ENCODE measurements at regions of chr20 and their contacts with region 1.

Region 1: GRCh38 chr20:49982346-49983122 is at the start of gene SNAI1:
- DNase-seq: peak; percentile 90
- H3K4me3 ChIP-seq: peak within 1 kb of the TSS; percentile 50
- H3K27ac ChIP-seq: peak within 1 kb of the TSS; percentile 49
- H3K4me1 ChIP-seq: peaks cover 37% of the 10 kb centered on the region
- H3K27me3 ChIP-seq: no peaks in the 10 kb centered on the region
- CTCF ChIP-seq: peak; percentile 59; the same call in 1 of the 2 replicates
- total RNA-seq, gene SNAI1: 4.1 and 4.4 TPM in 2 replicates

Region 2: DNA sequence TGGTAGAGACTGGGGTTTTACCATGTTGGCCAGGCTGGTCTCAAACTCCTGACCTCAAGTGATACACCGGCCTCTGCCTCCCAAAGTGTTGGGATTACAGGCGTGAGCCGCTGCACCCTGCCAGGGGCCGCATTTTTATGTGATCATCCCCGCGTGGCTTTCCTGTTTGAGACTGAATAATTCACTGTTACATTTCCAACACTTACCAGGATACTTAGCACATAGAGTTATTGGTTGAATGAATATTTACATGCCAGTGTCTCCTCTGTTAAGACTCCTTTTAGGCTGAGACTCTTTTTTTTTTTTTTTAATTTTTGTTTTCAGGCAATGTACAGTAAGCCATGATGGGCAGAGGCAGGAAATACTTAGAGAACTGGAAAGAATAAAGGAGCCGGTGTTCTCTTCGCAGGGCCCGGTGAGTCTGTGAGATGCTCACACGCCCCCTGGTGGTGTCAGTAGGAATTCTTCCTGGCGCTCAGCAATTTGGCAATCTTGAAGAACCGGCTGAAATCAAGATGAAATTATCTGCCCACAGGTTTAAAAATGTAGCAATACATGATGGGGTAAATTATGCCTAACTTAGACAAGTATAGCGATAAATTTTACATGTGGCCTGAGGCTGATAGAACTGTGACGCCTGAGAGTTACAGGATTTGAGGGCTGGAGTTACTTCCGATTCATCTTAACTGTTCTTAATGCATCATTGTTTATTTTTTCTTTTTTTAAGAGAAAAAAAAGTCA is 54.0 kb before region 1 on chr20:
- CTCF ChIA-PET with region 1: no interaction called
- POLR2A ChIA-PET with region 1: no interaction called
- intact Hi-C with region 1: no loop called
- DNase-seq: peak; percentile 91
- H3K4me3 ChIP-seq: no peak overlapping the region
- H3K27ac ChIP-seq: no peak overlapping the region
- H3K4me1 ChIP-seq: no peaks in the 10 kb centered on the region
- H3K27me3 ChIP-seq: no peaks in the 10 kb centered on the region
- CTCF ChIP-seq: peak; percentile 91

Region 3: DNA sequence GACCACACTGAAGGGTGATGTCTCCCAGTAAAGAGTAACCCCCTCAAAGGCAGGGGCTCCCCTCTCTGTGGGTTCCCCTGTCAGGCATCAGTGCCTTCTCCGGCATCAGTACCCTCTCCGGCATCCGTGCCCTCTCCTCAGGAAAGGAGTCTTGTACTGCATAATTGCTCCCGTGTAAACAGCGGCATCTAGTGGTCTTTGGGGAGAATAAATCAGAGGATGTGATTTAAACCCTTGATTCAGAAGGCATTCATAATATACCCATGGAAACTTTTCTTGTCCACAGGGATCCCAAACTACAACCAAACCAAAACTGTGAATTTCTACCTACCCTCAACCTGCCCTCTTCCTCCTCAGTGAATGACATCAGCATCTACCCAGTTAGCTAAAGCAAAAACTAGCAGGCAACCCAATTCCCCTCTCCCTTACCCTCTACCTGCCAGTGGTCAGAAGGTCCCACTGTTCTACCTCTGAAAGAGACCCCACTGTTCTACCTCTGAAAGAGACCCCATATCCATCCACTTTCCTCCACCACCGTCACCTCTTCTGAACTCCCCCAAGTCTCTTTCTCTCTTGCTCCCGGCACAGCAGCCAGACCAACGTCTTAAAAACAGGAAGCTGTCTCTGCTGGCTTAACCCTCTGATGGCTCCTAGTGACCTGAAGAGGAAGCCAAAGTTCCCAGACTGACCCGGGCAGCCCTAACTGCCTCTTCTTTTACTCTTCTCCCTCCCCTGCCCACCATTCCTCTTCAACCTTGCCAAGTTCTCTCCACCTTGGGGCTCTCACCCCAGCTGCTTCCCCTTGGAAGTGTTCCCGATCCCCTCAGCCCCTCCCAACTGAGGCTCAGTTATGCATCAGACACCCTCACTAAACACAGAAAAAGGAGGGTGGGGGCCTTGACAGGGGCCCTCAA is 103.2 kb after region 1 on chr20:
- CTCF ChIA-PET with region 1: interaction called, 15 read pairs
- POLR2A ChIA-PET with region 1: no interaction called
- intact Hi-C with region 1: no loop called
- DNase-seq: peak; percentile 85
- H3K4me3 ChIP-seq: no peak overlapping the region
- H3K27ac ChIP-seq: peak overlapping the region; percentile 67
- H3K4me1 ChIP-seq: peaks cover 20% of the 10 kb centered on the region
- H3K27me3 ChIP-seq: no peaks in the 10 kb centered on the region
- CTCF ChIP-seq: peak; percentile 90

Region 4: GRCh38 chr20:50165684-50166554 is 183.4 kb after region 1 on chr20:
- CTCF ChIA-PET with region 1: interaction called, 14 read pairs
- POLR2A ChIA-PET with region 1: no interaction called
- intact Hi-C with region 1: no loop called
- DNase-seq: peak; percentile 99
- H3K4me3 ChIP-seq: peak overlapping the region; percentile 41
- H3K27ac ChIP-seq: peak overlapping the region; percentile 89
- H3K4me1 ChIP-seq: peaks cover 22% of the 10 kb centered on the region
- H3K27me3 ChIP-seq: no peaks in the 10 kb centered on the region
- CTCF ChIP-seq: 0 out of 2 replicates have a peak, but pooled peaks have one; percentile 12

Region 5: DNA sequence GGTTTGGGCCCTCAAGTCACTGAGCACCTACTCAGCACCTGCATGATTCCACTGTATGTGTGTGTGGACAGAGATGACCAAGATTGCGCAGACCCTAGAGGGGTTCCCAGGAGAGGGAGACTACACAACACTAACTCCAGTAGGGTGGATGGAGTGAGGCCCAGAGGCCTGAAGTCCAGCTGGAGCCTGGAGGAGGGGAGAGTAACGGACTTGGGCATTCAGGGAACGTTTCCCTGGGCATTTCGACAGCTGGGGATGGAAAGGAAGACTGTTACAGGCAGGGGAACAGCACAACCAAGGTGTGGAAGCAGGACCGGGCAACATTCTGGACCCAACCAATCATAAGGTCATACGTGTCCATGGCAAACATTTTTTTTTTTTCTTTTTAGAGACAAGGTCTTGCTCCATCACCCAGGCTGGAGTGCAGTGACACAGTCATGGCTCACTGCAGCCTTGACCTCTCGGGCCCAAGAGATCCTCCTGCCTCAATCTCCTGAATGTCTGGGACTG is 197.0 kb after region 1 on chr20:
- CTCF ChIA-PET with region 1: interaction called, 20 read pairs
- POLR2A ChIA-PET with region 1: no interaction called
- intact Hi-C with region 1: loop called (anchors 2 kb)
- DNase-seq: no peak
- H3K4me3 ChIP-seq: no peak overlapping the region
- H3K27ac ChIP-seq: no peak overlapping the region
- H3K4me1 ChIP-seq: peaks cover 6% of the 10 kb centered on the region
- H3K27me3 ChIP-seq: no peaks in the 10 kb centered on the region
- CTCF ChIP-seq: no peak; the same call in 1 of the 2 replicates

Region 6: DNA sequence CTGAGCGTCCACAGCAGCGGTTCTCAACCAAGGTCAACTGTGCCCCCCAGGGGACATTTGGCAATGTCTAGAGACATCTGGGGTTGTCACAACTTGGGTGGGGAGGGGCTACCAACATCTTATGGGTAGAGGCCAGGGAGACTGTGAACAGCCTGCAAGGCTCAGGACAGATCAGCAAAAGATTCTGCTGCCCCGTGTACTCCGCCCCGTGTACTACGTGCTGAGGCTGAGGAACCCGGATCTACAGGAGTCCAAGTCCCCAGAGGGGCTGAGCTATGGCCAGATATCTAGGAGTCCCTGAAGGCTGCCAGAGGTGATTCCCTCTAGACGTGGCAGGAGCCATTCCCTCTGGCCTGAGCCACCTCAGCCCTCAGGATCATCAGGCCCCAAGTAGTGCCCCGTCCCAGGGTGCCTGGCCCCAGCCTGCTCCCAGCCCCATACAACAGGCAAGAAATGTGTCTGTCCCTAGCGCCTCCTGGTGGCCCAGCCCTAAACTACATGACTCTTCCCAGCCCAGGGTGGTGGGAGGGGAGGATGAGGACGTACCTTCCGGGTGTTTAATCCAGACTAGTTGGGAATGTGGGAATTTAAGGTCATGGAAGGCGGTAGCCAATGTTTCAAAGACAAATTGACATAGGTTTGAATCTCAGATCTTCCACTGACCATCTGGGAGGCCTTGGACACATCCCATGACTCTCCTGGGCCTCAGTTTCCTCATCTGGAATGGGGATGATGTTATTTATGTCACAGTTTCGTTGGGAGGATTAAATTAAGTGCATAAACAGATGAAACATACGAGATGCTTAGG is 478.1 kb after region 1 on chr20:
- CTCF ChIA-PET with region 1: no interaction called
- POLR2A ChIA-PET with region 1: no interaction called
- intact Hi-C with region 1: loop called (anchors 5 kb)
- DNase-seq: peak; percentile 88
- H3K4me3 ChIP-seq: no peak overlapping the region
- H3K27ac ChIP-seq: no peak overlapping the region
- H3K4me1 ChIP-seq: peaks cover 19% of the 10 kb centered on the region
- H3K27me3 ChIP-seq: no peaks in the 10 kb centered on the region
- CTCF ChIP-seq: peak; percentile 93

Measured in A673 (cell line).